HepG2 (cell line): ENCODE measurements at regions of chr2 and their contacts with region 1.

Region 1: DNA sequence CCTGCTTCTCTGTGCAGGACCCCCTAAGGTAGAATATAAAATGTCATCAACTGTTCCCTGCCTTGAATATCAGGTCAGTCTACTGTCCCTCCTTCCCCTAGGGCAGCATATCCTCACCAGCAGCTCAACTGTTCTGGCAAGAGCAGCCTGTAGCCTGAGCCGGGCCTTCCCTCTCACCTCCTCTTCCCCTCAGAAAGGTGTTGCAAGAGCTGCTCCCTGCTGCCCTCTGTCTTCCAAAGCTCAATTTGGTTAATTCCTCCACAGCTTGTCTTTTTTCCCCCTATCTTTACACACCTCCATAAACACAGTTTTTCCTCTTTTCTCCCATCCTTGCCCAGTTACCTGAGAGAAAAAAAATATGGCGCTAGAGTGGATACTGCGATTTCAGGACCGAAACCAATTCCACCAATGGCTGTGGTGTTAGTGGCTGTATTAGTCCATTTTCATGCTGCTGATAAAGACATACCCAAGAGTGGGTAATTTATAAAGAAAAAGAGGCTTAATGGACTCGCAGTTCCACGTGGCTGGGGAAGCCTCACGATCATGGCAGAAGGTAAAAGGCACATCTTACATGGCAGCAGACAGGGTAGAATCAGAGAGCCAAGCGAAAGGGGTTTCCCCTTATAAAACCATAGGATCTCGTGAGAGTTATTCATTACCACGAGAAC is 184.7 kb downstream of the MREG start:
- DNase-seq: peak; percentile 81
- ATAC-seq: peak; percentile 82
- H3K4me3 ChIP-seq: no peak overlapping the region
- H3K27ac ChIP-seq: peak overlapping the region; percentile 67
- H3K4me1 ChIP-seq: peaks cover 82% of the 10 kb centered on the region
- H3K27me3 ChIP-seq: no peaks in the 10 kb centered on the region
- CTCF ChIP-seq: peak; percentile 76
- EP300 ChIP-seq: peak in 1 of 2 experiments; percentile 62; a peak in 2 of 4 replicates
- POLR2A ChIP-seq: no peak
- RAD21 ChIP-seq: peak; percentile 69

Region 2: GRCh38 chr2:215418064-215418963 is 410.3 kb before region 1 on chr2:
- CTCF ChIA-PET with region 1: no interaction called
- POLR2A ChIA-PET with region 1: interaction called, 3 read pairs
- in situ Hi-C with region 1: no loop called
- intact Hi-C with region 1: loop called (anchors 5 kb)
- DNase-seq: peak; percentile 89
- ATAC-seq: peak; percentile 42
- H3K4me3 ChIP-seq: peak overlapping the region; percentile 3 to 31 (median 13); a peak in 2 of 6 replicates
- H3K27ac ChIP-seq: peak overlapping the region; percentile 77
- H3K4me1 ChIP-seq: peaks cover 100% of the 10 kb centered on the region
- H3K27me3 ChIP-seq: no peaks in the 10 kb centered on the region
- CTCF ChIP-seq: no peak
- EP300 ChIP-seq: peak; percentile 45 to 94; a peak in 3 of 4 replicates
- POLR2A ChIP-seq: peak in 1 of 2 experiments; percentile 28; a peak in 1 of 4 replicates
- RAD21 ChIP-seq: no peak

Region 3: GRCh38 chr2:215680605-215681598 is 147.7 kb before region 1 on chr2:
- CTCF ChIA-PET with region 1: no interaction called
- POLR2A ChIA-PET with region 1: interaction called, 4 read pairs
- in situ Hi-C with region 1: no loop called
- intact Hi-C with region 1: loop called (anchors 1 kb)
- DNase-seq: peak; percentile 100
- ATAC-seq: peak; percentile 97
- H3K4me3 ChIP-seq: 0 out of 6 replicates have a peak overlapping the region, but pooled peaks of 1 of the 3 experiments have one; percentile 11
- H3K27ac ChIP-seq: peak overlapping the region; percentile 89
- H3K4me1 ChIP-seq: peaks cover 87% of the 10 kb centered on the region
- H3K27me3 ChIP-seq: no peaks in the 10 kb centered on the region
- CTCF ChIP-seq: no peak
- EP300 ChIP-seq: peak; percentile 98 to 100
- POLR2A ChIP-seq: no peak
- RAD21 ChIP-seq: no peak; the same call in none of the 2 replicates

Region 4: DNA sequence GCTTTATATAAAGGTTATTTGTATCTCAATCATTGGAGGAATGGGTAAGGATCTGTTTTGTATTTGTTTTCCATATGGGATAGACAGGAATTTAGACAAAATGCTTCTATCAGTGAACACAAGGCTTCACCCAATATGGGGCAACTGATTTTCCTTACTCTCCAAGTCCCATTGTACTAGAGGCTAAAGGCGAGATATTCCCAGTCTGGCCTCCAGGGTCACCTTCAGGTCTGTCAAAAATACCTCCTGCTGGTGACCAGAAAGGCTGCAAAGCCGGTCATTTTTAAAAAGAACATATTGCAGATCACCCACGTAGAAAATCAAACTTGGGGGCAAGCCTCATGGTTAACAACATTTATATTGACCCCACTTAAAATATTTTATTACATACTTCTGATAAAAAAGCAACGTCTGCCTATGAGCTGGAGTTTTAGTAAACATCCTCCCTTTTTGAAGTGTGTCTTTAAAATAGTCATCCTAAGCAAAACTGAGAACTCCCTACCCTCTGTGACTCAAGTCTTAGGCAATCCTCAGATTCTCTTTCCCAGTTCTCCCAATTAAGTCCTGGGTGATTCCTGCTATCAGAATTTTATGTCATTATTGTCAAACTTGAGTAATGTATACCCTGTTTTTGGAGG is 91.9 kb before region 1 on chr2:
- CTCF ChIA-PET with region 1: no interaction called
- POLR2A ChIA-PET with region 1: no interaction called
- in situ Hi-C with region 1: no loop called
- intact Hi-C with region 1: loop called (anchors 5 kb)
- DNase-seq: peak; percentile 69
- ATAC-seq: peak; percentile 97
- H3K4me3 ChIP-seq: no peak overlapping the region
- H3K27ac ChIP-seq: no peak overlapping the region
- H3K4me1 ChIP-seq: peaks cover 9% of the 10 kb centered on the region; the same call in 1 of the 2 replicates
- H3K27me3 ChIP-seq: no peaks in the 10 kb centered on the region
- CTCF ChIP-seq: no peak
- EP300 ChIP-seq: no peak
- POLR2A ChIP-seq: no peak
- RAD21 ChIP-seq: peak; percentile 56; the same call in 1 of the 2 replicates

Region 5: GRCh38 chr2:215920244-215921100 is 91.8 kb after region 1 on chr2:
- CTCF ChIA-PET with region 1: interaction called, 3 read pairs
- POLR2A ChIA-PET with region 1: no interaction called
- in situ Hi-C with region 1: no loop called
- intact Hi-C with region 1: loop called (anchors 2 kb)
- DNase-seq: peak; percentile 81
- ATAC-seq: peak; percentile 98
- H3K4me3 ChIP-seq: no peak overlapping the region
- H3K27ac ChIP-seq: peak overlapping the region; percentile 16
- H3K4me1 ChIP-seq: peaks cover 42% of the 10 kb centered on the region
- H3K27me3 ChIP-seq: no peaks in the 10 kb centered on the region
- CTCF ChIP-seq: peak; percentile 96
- EP300 ChIP-seq: peak in 1 of 2 experiments; percentile 43; a peak in 2 of 4 replicates
- POLR2A ChIP-seq: no peak
- RAD21 ChIP-seq: peak; percentile 96

Region 6: GRCh38 chr2:216066255-216066654 is 237.6 kb after region 1 on chr2:
- CTCF ChIA-PET with region 1: no interaction called
- POLR2A ChIA-PET with region 1: no interaction called
- in situ Hi-C with region 1: no loop called
- intact Hi-C with region 1: no loop called
- DNase-seq: no peak
- ATAC-seq: peak; percentile 9; the same call in 2 of the 3 replicates
- H3K4me3 ChIP-seq: no peak overlapping the region
- H3K27ac ChIP-seq: no peak overlapping the region
- H3K4me1 ChIP-seq: peaks cover 49% of the 10 kb centered on the region
- H3K27me3 ChIP-seq: no peaks in the 10 kb centered on the region
- CTCF ChIP-seq: no peak
- EP300 ChIP-seq: no peak
- POLR2A ChIP-seq: no peak
- RAD21 ChIP-seq: no peak

Region 7: GRCh38 chr2:217695033-217695520 is 1866.4 kb after region 1 on chr2:
- CTCF ChIA-PET with region 1: no interaction called
- POLR2A ChIA-PET with region 1: no interaction called
- in situ Hi-C with region 1: no loop called
- intact Hi-C with region 1: no loop called
- DNase-seq: no peak
- ATAC-seq: no peak
- H3K4me3 ChIP-seq: no peak overlapping the region
- H3K27ac ChIP-seq: no peak overlapping the region
- H3K4me1 ChIP-seq: no peaks in the 10 kb centered on the region
- H3K27me3 ChIP-seq: peaks cover 0 to 1% of the 10 kb centered on the region in 2 experiments; a peak in 2 of 5 replicates
- CTCF ChIP-seq: no peak
- EP300 ChIP-seq: no peak
- POLR2A ChIP-seq: no peak
- RAD21 ChIP-seq: no peak